ENCODE measurements at regions of chr17 and their contacts with region 1.

Region 1: DNA sequence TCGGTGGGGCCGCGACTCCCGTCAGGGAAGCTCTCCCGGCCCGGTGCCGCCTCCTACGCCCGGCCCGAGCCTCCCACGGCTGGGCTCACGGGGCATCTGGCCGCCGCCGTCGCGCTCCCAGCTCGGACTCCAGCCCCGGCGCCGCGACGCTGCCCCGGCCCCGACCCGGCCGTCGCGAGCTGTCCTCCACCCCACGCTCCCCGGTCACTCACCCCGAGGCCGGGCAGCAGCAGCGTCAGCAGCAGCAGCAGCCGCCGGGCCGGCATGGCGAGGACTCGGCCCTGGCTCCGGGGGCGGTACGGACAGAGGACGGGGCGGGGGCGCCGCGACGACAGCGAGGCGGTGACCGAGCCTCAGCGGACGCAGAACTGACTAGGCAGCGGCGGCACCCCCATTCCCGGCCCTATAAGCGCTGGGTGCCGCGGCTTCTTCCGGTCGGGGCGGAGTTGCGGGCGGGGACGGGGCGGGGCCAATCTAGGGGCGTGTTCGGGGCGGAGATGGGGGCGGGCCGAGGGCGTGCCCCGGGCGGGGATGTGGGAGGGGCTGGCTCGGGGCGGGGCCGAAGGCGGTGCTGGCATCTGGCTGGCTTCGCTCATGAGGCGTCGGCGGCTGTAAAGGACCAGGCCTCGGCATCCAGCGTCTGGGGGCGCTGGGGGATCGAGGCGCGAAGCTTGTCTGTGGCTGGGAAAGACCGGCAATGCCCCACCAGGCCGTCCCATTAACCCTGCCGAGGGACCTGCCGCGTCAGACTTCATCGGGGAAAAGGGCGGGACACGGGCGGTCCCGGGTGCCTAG is at the start of gene ERN1:
- DNase-seq: peak; percentile 97
- H3K4me3 Mint-ChIP-seq: peak within 1 kb of the TSS; percentile 99
- H3K27ac Mint-ChIP-seq: peak within 1 kb of the TSS; percentile 97
- H3K4me1 Mint-ChIP-seq: peaks cover 54% of the 10 kb centered on the region
- H3K27me3 Mint-ChIP-seq: no peaks in the 10 kb centered on the region
- total RNA-seq, gene ERN1: 41.3 and 52.1 TPM in 2 replicates

Region 2: DNA sequence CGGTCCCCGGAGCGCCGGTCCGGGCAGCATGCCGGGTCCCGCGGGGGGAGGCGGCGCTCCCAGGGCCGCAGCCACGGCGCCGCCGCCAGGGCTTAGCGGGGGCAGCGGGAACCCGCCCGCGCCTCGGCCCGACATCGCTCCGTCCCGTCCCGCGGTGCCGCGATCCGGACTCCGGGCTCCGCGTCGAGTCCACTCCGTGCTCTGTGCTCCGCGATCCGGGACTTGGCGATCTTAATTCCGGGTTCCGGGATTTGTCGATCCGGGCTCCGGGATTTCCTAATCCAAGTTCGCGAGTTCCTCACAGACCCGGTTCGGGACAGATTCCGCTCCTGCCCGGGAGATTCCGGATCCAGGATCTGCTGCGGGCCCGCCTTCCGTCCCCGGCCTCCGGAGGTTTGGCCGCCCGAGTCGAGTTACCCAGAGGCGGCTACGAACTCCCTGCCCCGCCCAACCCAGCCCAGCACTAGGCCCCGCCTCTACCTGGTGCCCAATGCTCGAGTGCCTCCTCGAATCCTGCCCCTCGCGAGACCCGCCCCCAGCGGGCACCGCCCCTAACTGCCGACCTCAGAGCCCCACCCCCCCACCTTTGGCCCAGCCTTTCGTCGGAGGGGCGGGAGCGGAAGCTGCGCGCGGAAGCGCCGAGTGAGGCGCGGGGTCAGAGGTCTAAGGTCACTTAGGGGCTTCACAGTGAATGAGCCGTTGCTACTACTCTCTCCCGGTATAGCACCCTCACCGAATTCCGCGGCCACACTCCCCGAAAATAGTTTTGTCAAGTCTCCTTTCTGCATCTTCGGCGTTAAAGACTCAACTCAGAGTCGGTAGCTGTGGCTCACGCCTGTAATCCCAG is 287.2 kb before region 1 on chr17 and contains the start of gene SMARCD2:
- intact Hi-C with region 1: loop called (anchors 2 kb)
- DNase-seq: peak; percentile 99
- H3K4me3 Mint-ChIP-seq: peak within 1 kb of the TSS; percentile 98
- H3K27ac Mint-ChIP-seq: peak within 1 kb of the TSS; percentile 93
- H3K4me1 Mint-ChIP-seq: peaks cover 27% of the 10 kb centered on the region
- H3K27me3 Mint-ChIP-seq: no peaks in the 10 kb centered on the region
- total RNA-seq, gene SMARCD2: 120 and 121 TPM in 2 replicates

Region 3: GRCh38 chr17:63946440-63947367 is 183.3 kb before region 1 on chr17:
- intact Hi-C with region 1: loop called (anchors 1 kb)
- DNase-seq: peak; percentile 90
- H3K4me3 Mint-ChIP-seq: peak overlapping the region; percentile 71
- H3K27ac Mint-ChIP-seq: peak overlapping the region; percentile 74
- H3K4me1 Mint-ChIP-seq: peaks cover 11% of the 10 kb centered on the region
- H3K27me3 Mint-ChIP-seq: peaks cover 4% of the 10 kb centered on the region

Region 4: GRCh38 chr17:64063766-64064224 is 66.2 kb before region 1 on chr17:
- intact Hi-C with region 1: loop called (anchors 1 kb)
- DNase-seq: peak; percentile 84
- H3K4me3 Mint-ChIP-seq: no peak overlapping the region
- H3K27ac Mint-ChIP-seq: peak overlapping the region; percentile 37
- H3K4me1 Mint-ChIP-seq: peaks cover 72% of the 10 kb centered on the region
- H3K27me3 Mint-ChIP-seq: no peaks in the 10 kb centered on the region

Region 5: GRCh38 chr17:64115871-64116534 is 14.0 kb before region 1 on chr17:
- intact Hi-C with region 1: loop called (anchors 1 kb)
- DNase-seq: no peak
- H3K4me3 Mint-ChIP-seq: peak overlapping the region; percentile 59
- H3K27ac Mint-ChIP-seq: peak overlapping the region; percentile 79
- H3K4me1 Mint-ChIP-seq: peaks cover 56% of the 10 kb centered on the region
- H3K27me3 Mint-ChIP-seq: no peaks in the 10 kb centered on the region

Region 6: GRCh38 chr17:64281962-64282727 is 152.2 kb after region 1 on chr17:
- intact Hi-C with region 1: loop called (anchors 5 kb)
- DNase-seq: peak; percentile 85
- H3K4me3 Mint-ChIP-seq: no peak overlapping the region
- H3K27ac Mint-ChIP-seq: no peak overlapping the region
- H3K4me1 Mint-ChIP-seq: peaks cover 4% of the 10 kb centered on the region
- H3K27me3 Mint-ChIP-seq: no peaks in the 10 kb centered on the region